CD4-positive, alpha-beta memory T cell (primary cell): ENCODE measurements at regions of chr5 and their contacts with region 1.

Region 1: DNA sequence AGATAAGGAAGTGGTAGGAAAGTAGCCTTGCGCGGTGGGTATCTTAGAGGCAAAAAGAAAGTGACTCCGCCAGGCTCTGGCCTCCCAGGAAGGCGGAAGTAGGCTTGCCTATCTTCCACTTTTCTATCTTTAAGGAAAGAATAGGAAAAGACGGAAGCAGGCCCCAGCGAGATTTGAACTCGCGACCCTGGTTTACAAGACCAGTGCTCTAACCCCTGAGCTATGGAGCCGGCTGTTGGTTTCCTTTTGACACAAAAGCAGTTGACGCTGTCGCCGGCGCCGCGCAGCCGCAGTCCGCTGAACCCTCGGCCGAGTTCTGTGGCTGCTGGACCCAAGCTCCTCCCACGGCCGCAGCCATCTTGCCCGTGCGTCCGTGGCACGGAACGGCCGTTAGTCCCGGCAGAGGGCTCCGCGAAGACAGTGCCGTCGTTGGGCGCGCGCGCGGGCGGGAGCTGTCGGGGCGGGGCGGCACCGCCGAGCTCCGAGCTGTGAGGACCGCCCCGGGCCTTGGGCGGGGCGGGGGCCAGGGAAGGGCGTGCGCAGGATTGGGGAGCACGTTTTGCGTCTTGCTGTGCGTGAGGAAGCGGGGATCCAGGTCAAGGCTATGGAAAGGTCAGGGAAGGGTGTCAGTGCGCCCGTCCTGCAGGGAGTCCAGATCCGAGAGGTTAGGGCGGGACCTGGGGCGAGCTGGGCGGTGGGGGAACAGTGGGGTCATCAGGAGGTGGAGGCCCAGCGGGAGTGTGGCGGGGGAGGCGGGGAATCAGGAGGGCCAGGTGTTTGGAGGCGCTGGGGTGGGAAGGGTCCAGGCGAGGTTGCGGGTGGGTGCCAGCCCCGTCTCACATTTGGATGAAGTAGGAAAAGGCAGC is 13.2 kb downstream of the TRIM7 start:
- DNase-seq: peak; percentile 94 to 98 (median 96)
- H3K4me3 ChIP-seq: peak overlapping the region; percentile 87 to 97
- H3K4me3 Mint-ChIP-seq: peak overlapping the region; percentile 96 to 99 (median 98)
- H3K27ac ChIP-seq: peak overlapping the region; percentile 79
- H3K27ac Mint-ChIP-seq: peak overlapping the region; percentile 95 to 100 (median 97)
- H3K4me1 ChIP-seq: peaks cover 16% of the 10 kb centered on the region
- H3K4me1 Mint-ChIP-seq: peaks cover 16 to 64% (median 32%) of the 10 kb centered on the region in 4 donors
- H3K27me3 ChIP-seq: no peaks in the 10 kb centered on the region
- H3K27me3 Mint-ChIP-seq: peaks cover 5 to 19% of the 10 kb centered on the region in 2 donors

Region 2: DNA sequence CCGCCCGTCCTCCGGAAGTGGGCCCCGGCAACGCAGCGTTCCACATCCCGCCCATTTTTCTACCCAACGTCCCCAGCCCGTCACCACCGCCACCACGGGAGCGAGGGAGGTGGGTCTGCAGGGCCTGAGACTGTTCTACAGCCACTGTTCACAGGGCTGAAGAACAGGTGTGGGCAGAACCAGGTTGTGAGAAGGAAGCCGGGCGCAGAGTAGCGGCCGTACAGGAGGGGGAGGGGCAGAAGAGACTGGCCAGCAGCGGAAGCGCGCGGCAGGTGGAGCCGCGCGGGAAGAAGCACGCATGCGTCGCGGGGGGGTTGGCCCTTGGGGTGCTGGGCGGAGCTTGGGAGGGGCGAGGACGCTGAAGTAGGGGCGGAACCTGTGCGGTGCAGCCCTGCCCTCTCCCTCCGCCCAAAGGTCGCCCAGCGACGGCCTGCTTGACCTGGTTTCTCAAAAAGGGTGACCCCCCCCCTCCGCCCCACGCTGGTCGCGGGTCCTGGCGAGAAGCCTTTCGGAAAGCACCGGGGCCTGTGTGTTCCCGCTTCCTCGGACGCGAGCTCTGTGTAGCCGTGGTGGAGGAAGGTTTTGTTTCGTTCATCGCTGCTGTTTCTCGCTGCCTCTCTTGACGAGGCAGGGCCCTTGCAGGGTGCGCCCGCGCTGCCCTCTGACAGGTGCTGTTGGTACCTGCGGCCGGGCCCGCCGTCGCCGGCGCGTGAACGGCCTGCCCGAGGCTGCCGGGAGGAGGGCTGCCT is 381.4 kb before region 1 on chr5:
- CTCF ChIA-PET with region 1: no interaction called
- POLR2A ChIA-PET with region 1: interaction called, 10 read pairs
- intact Hi-C with region 1: loop called (anchors 10 kb)
- DNase-seq: peak; percentile 95 to 99 (median 98)
- H3K4me3 ChIP-seq: peak overlapping the region; percentile 60 to 95
- H3K4me3 Mint-ChIP-seq: peak overlapping the region; percentile 83 to 99 (median 90)
- H3K27ac ChIP-seq: peak overlapping the region; percentile 93
- H3K27ac Mint-ChIP-seq: peak overlapping the region; percentile 92 to 100 (median 99)
- H3K4me1 ChIP-seq: peaks cover 61% of the 10 kb centered on the region
- H3K4me1 Mint-ChIP-seq: peaks cover 53 to 87% (median 69%) of the 10 kb centered on the region in 4 donors
- H3K27me3 ChIP-seq: no peaks in the 10 kb centered on the region
- H3K27me3 Mint-ChIP-seq: no peaks in the 10 kb centered on the region

Region 3: GRCh38 chr5:180960209-180960608 is 231.6 kb before region 1 on chr5:
- CTCF ChIA-PET with region 1: no interaction called
- POLR2A ChIA-PET with region 1: no interaction called
- intact Hi-C with region 1: no loop called
- DNase-seq: no peak
- H3K4me3 ChIP-seq: no peak overlapping the region
- H3K4me3 Mint-ChIP-seq: no peak overlapping the region
- H3K27ac ChIP-seq: no peak overlapping the region
- H3K27ac Mint-ChIP-seq: no peak overlapping the region
- H3K4me1 ChIP-seq: no peaks in the 10 kb centered on the region
- H3K4me1 Mint-ChIP-seq: peaks cover 0 to 5% (median 3%) of the 10 kb centered on the region in 4 donors
- H3K27me3 ChIP-seq: no peaks in the 10 kb centered on the region
- H3K27me3 Mint-ChIP-seq: peaks cover 10 to 14% of the 10 kb centered on the region in 2 donors

Region 4: DNA sequence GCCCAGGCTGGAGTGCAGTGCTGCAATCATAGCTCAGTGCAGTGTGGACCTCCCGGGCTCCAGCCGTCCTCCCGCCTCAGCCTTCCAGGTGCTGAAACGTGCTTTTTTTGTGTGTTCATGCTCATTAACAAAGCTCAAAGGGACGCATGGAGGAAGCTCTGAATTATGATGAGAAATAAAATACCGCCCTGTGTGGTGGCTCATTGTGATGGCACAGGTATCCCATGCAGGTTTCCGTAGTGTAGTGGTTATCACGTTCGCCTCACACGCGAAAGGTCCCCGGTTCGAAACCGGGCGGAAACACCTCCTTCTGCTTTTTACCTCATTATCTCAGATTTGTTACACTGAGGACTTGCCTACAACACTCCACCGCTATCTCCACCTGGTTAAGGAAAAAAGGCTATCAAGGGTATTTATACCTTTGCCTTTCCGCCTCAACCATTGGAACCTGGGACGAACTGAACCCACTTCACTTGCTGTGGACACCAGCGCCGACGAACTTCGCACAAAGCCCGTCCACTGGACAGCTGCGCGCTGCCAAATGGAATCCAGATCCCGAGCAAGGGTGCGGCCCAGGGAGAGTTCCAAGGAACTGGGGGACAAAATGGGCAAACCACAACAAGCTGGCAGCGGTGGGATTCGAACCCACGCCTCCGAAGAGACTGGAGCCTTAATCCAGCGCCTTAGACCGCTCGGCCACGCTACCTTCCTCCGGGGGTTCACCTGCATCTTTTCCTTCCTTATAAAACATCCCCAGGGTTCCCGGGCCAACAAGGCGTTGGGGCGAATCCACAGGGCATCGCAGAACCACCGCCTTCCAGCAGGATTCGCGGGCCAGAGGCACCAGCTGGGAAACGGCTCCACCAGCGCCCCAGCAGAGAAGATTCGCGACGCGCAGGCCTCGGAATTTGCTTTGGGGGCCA is 18.1 kb before region 1 on chr5:
- CTCF ChIA-PET with region 1: interaction called, 10 read pairs
- POLR2A ChIA-PET with region 1: interaction called, 31 read pairs
- intact Hi-C with region 1: no loop called
- DNase-seq: peak; percentile 46 to 67 (median 57)
- H3K4me3 ChIP-seq: no peak overlapping the region
- H3K4me3 Mint-ChIP-seq: peak overlapping the region; percentile 25 to 89 (median 84)
- H3K27ac ChIP-seq: no peak overlapping the region
- H3K27ac Mint-ChIP-seq: peak overlapping the region in 6 of 7 donors; percentile 64 to 94 (median 73)
- H3K4me1 ChIP-seq: peaks cover 17% of the 10 kb centered on the region
- H3K4me1 Mint-ChIP-seq: peaks cover 7 to 34% (median 23%) of the 10 kb centered on the region in 4 donors
- H3K27me3 ChIP-seq: peaks cover 48% of the 10 kb centered on the region
- H3K27me3 Mint-ChIP-seq: peaks cover 37 to 49% of the 10 kb centered on the region in 2 donors

Region 5: DNA sequence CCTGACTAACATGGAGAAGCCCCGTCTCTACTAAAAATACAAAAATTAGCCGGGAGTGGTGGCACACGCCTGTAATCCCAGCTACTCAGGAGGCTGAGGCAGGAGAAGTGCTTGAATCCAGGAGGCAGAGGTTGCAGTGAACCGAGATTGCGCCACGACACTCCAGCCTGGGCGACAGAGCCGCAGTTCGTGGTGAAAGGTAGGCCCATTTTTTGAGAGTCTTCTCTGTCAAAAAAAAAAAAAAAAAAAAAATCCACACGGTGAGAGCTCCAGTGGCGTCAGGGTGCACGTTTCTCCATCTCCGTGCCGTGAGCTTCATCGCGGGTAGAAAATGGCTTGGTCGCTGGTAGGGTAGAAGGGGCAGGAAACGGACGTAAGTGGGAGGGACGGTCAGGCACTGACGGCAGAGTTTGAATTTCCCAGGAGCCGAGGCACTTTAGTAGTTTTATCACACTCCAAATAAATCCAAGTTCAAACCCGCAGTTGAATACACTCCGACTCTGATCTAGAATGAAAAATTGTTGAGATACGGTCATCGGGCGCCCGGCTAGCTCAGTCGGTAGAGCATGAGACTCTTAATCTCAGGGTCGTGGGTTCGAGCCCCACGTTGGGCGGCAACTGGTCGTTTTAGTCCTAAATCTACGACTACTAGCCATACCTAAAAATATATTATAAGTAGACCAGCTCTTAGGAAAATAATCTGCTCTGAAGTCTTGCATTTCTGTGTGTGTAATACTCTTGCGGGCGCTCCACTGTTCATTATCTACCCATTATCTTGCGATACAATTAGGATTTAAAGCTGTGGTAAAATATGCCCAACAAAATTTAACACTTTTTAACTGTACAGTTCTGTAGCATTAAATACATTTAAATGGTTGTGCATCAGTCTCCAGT is 15.7 kb after region 1 on chr5:
- CTCF ChIA-PET with region 1: interaction called, 100 read pairs
- POLR2A ChIA-PET with region 1: interaction called, 412 read pairs
- intact Hi-C with region 1: loop called (anchors 1 kb)
- DNase-seq: peak; percentile 76 to 88 (median 81)
- H3K4me3 ChIP-seq: peak overlapping the region; percentile 71
- H3K4me3 Mint-ChIP-seq: peak overlapping the region; percentile 88 to 97 (median 92)
- H3K27ac ChIP-seq: peak overlapping the region; percentile 67
- H3K27ac Mint-ChIP-seq: peak overlapping the region; percentile 91 to 100 (median 98)
- H3K4me1 ChIP-seq: peaks cover 31% of the 10 kb centered on the region
- H3K4me1 Mint-ChIP-seq: peaks cover 24 to 47% (median 32%) of the 10 kb centered on the region in 4 donors
- H3K27me3 ChIP-seq: no peaks in the 10 kb centered on the region
- H3K27me3 Mint-ChIP-seq: peaks cover 7 to 10% of the 10 kb centered on the region in 2 donors

Region 6: GRCh38 chr5:181217111-181217802 is 25.5 kb after region 1 on chr5:
- CTCF ChIA-PET with region 1: interaction called, 28 read pairs
- POLR2A ChIA-PET with region 1: interaction called, 375 read pairs
- intact Hi-C with region 1: loop called (anchors 1 kb)
- DNase-seq: peak; percentile 66 to 84 (median 71)
- H3K4me3 ChIP-seq: peak overlapping the region; percentile 32 to 61
- H3K4me3 Mint-ChIP-seq: peak overlapping the region; percentile 95 to 100 (median 99)
- H3K27ac ChIP-seq: peak overlapping the region; percentile 54
- H3K27ac Mint-ChIP-seq: peak overlapping the region; percentile 96 to 100 (median 98)
- H3K4me1 ChIP-seq: peaks cover 36% of the 10 kb centered on the region
- H3K4me1 Mint-ChIP-seq: peaks cover 27 to 60% (median 44%) of the 10 kb centered on the region in 4 donors
- H3K27me3 ChIP-seq: no peaks in the 10 kb centered on the region
- H3K27me3 Mint-ChIP-seq: peaks cover 2 to 20% of the 10 kb centered on the region in 2 donors

Region 7: DNA sequence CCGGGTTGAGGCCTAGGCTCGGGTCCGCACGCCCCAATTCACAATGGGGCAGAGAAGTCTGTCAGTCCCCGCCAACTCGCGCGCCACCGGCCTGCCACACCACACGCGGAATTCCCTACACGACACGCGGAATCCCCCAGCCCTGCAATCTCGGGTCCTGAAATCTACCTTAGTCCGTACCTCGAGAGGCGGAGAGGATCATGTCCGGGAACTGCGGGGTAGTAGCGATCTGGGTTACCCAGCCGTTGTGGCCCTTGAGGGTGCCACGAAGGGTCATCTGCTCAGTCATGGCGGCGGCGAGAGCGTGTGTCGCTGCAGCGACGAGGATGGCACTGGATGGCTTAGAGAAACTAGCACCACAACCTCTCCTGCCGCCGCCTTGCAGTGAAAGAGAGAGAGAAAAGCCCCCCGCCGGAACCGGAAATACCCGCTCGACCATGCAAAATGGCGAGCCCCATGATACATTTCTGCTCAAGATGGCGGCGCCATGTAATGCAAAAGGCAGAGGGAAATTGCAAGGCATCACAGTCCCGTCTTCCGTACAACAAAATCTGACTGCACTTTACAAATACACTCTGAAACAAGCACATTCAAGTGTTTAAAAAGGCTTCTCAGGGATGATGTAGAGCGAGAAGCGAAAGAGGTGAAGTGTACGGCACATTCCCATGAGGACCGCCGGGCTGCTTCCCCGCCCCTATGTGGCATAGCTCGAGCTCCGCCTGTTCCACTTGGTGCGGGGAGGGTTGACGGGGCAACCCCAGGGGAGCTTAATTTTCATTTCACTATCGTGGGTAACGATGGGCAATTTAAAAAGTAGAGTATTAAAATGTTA is 52.0 kb after region 1 on chr5 and contains the start of gene RACK1:
- CTCF ChIA-PET with region 1: interaction called, 4 read pairs
- POLR2A ChIA-PET with region 1: interaction called, 143 read pairs
- intact Hi-C with region 1: loop called (anchors 1 kb)
- DNase-seq: peak; percentile 90 to 95 (median 91)
- H3K4me3 ChIP-seq: peak within 1 kb of the TSS; percentile 97 to 98
- H3K4me3 Mint-ChIP-seq: peak within 1 kb of the TSS; percentile 93 to 100 (median 98)
- H3K27ac ChIP-seq: peak within 1 kb of the TSS; percentile 96
- H3K27ac Mint-ChIP-seq: peak within 1 kb of the TSS; percentile 96 to 100 (median 99)
- H3K4me1 ChIP-seq: peaks cover 61% of the 10 kb centered on the region
- H3K4me1 Mint-ChIP-seq: peaks cover 42 to 85% (median 63%) of the 10 kb centered on the region in 4 donors
- H3K27me3 ChIP-seq: no peaks in the 10 kb centered on the region
- H3K27me3 Mint-ChIP-seq: no peaks in the 10 kb centered on the region
- total RNA-seq, gene RACK1: 1,956 to 2,001 TPM